CD8-positive, alpha-beta T cell (primary cell): ENCODE measurements at regions of chr11 and their contacts with region 1.

Region 1: GRCh38 chr11:18012863-18013781 is at the start of gene SERGEF:
- DNase-seq: peak; percentile 80 to 97 (median 93)
- ATAC-seq: peak; percentile 82
- H3K4me3 ChIP-seq: peak within 1 kb of the TSS; percentile 94 to 99
- H3K4me3 Mint-ChIP-seq: peak within 1 kb of the TSS; percentile 99
- H3K27ac ChIP-seq: peak within 1 kb of the TSS; percentile 90
- H3K27ac Mint-ChIP-seq: peak within 1 kb of the TSS; percentile 97
- H3K4me1 ChIP-seq: peaks cover 16% of the 10 kb centered on the region
- H3K4me1 Mint-ChIP-seq: peaks cover 32% of the 10 kb centered on the region
- H3K27me3 ChIP-seq: no peaks in the 10 kb centered on the region
- H3K27me3 Mint-ChIP-seq: no peaks in the 10 kb centered on the region
- CTCF ChIP-seq: peak; percentile 8
- total RNA-seq, gene SERGEF: 36.6 to 44.7 TPM

Region 2: DNA sequence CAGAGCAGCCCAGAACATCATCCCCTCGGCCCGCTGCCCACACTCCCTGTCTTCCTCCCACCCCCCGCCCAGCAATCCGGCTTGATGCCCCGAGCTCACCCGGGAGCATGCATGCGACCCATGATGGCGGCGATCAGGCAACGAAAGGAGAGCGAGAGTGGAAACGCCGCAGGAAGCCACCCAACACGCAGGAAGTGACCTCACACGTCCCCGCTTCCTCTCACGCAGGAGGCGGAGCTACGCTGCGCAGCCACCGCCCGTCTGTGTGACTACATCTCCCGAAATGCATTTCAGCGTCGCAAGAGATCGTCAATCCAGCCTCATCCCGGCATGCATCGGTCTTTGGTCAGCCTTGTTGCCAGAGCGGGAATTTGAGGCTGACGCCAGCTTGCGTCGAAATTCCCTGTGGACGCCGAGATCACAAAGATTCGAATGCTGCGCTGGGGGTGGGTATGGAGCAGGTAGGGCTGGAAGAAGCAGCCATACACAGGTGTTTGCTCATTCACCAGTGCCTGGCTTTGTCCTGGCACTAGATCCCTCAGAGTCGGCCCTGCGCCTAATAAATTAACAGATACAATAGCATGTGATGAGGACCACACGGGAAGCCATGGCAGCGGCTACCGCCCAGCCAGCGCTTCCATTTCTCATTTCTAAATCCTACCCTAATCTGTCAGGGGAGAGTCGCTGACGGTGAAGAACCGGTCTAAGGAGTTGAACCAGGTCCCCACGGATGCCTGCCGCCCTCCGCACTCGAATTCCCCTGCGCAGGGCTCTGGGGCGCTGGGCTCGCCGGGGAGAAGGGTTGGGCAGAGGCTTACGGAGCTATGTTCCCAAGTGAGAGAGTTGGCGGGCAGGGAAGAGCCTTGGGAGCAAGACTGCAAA is 935.4 kb before region 1 on chr11 and contains the start of gene RPS13:
- CTCF ChIA-PET with region 1: no interaction called
- POLR2A ChIA-PET with region 1: interaction called, 5 read pairs
- intact Hi-C with region 1: loop called in 1 of 2 experiments (anchors 5 kb)
- DNase-seq: peak; percentile 88 to 99 (median 95)
- ATAC-seq: peak; percentile 94
- H3K4me3 ChIP-seq: peak within 1 kb of the TSS; percentile 86 to 95
- H3K4me3 Mint-ChIP-seq: peak within 1 kb of the TSS; percentile 99
- H3K27ac ChIP-seq: peak within 1 kb of the TSS; percentile 92 to 96
- H3K27ac Mint-ChIP-seq: peak within 1 kb of the TSS; percentile 99
- H3K4me1 ChIP-seq: peaks cover 25% of the 10 kb centered on the region
- H3K4me1 Mint-ChIP-seq: peaks cover 48% of the 10 kb centered on the region
- H3K27me3 ChIP-seq: no peaks in the 10 kb centered on the region
- H3K27me3 Mint-ChIP-seq: no peaks in the 10 kb centered on the region
- CTCF ChIP-seq: no peak
- total RNA-seq, gene RPS13: 2,112 to 2,169 TPM

Region 3: GRCh38 chr11:17991783-17992433 is 21.2 kb before region 1 on chr11:
- CTCF ChIA-PET with region 1: interaction called, 3 read pairs
- POLR2A ChIA-PET with region 1: no interaction called
- intact Hi-C with region 1: loop called in 1 of 2 experiments (anchors 1 kb)
- DNase-seq: peak in 8 of 9 experiments; percentile 20 to 67 (median 44)
- ATAC-seq: peak; percentile 81
- H3K4me3 ChIP-seq: no peak overlapping the region
- H3K4me3 Mint-ChIP-seq: no peak overlapping the region
- H3K27ac ChIP-seq: no peak overlapping the region
- H3K27ac Mint-ChIP-seq: no peak overlapping the region
- H3K4me1 ChIP-seq: no peaks in the 10 kb centered on the region
- H3K4me1 Mint-ChIP-seq: no peaks in the 10 kb centered on the region
- H3K27me3 ChIP-seq: no peaks in the 10 kb centered on the region
- H3K27me3 Mint-ChIP-seq: no peaks in the 10 kb centered on the region
- CTCF ChIP-seq: peak; percentile 96

Region 4: DNA sequence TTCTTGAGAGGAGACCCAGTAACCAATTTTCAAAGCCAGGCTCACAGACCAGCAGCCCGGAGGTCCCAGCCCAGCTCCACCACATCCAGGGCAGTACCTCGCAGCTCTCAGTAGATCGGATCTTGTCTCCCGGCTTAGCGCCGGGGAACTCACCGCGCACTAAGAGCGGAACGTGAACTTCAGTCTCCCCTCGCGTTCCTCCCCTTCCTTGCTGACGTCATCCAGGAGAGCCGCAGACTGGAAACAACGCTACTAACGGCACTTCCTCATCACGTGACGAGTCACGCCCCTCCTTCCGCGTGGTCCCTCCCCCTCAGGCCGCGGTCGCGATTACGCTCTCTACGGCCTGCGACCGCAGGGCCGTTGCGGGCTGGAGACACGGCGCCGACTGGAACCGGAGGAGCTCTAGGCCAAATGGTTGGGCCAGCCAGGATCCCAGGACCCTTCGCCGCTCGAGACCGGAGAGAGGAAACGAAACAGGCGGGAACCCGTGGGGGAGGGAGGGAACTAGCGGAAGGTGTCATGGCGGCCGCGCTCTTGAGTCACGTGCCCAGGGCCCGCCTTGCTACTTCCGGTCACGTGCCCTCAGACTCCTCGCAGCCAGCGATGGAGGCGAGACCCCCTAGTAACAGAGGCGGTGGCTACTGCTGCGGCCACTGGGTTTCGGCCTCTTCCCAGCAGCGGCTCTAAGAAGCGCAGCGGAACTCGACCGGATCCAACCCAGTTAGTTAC is 309.0 kb after region 1 on chr11 and contains the starts of genes GTF2H1 and HPS5:
- CTCF ChIA-PET with region 1: no interaction called
- POLR2A ChIA-PET with region 1: interaction called, 3 read pairs
- intact Hi-C with region 1: loop called (anchors 1 to 5 kb)
- DNase-seq: peak; percentile 91 to 100 (median 96)
- ATAC-seq: peak; percentile 87
- H3K4me3 ChIP-seq: peak within 1 kb of the TSS; percentile 89 to 94
- H3K4me3 Mint-ChIP-seq: peak within 1 kb of the TSS; percentile 100
- H3K27ac ChIP-seq: peak within 1 kb of the TSS; percentile 92 to 99
- H3K27ac Mint-ChIP-seq: peak within 1 kb of the TSS; percentile 100
- H3K4me1 ChIP-seq: peaks cover 51% of the 10 kb centered on the region
- H3K4me1 Mint-ChIP-seq: peaks cover 81% of the 10 kb centered on the region
- H3K27me3 ChIP-seq: no peaks in the 10 kb centered on the region
- H3K27me3 Mint-ChIP-seq: no peaks in the 10 kb centered on the region
- CTCF ChIP-seq: no peak
- total RNA-seq, gene GTF2H1: 11.3 to 14.3 TPM
- total RNA-seq, gene HPS5: 9.9 to 12.6 TPM

Region 5: GRCh38 chr11:18540207-18541009 is 527.3 kb after region 1 on chr11:
- CTCF ChIA-PET with region 1: no interaction called
- POLR2A ChIA-PET with region 1: no interaction called
- intact Hi-C with region 1: loop called in 1 of 2 experiments (anchors 10 kb)
- DNase-seq: peak in 2 of 9 experiments; percentile 52 to 64
- ATAC-seq: peak; percentile 63
- H3K4me3 ChIP-seq: no peak overlapping the region
- H3K4me3 Mint-ChIP-seq: no peak overlapping the region
- H3K27ac ChIP-seq: no peak overlapping the region
- H3K27ac Mint-ChIP-seq: no peak overlapping the region
- H3K4me1 ChIP-seq: no peaks in the 10 kb centered on the region
- H3K4me1 Mint-ChIP-seq: no peaks in the 10 kb centered on the region
- H3K27me3 ChIP-seq: no peaks in the 10 kb centered on the region
- H3K27me3 Mint-ChIP-seq: no peaks in the 10 kb centered on the region
- CTCF ChIP-seq: peak; percentile 59

Region 6: DNA sequence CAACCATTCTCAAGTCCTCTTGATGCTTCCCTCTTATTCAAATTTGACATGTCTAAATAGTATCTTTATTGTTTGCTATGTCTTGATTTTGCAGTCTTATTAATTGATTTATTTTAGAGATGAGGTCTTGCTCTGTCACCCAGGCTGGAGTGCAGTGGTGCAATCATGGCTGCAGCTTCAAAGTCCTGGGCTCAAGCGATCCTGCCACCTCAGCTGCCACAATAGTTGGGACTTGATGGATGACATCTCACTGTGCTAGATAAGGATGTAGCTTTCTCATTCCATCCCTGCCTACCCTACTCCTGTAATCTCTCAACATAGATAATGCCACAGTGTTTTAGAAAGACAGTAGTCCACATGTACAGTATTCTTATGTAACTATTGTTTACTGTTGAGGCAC is 628.6 kb after region 1 on chr11:
- CTCF ChIA-PET with region 1: no interaction called
- POLR2A ChIA-PET with region 1: no interaction called
- intact Hi-C with region 1: no loop called
- DNase-seq: no peak
- ATAC-seq: no peak
- H3K4me3 ChIP-seq: no peak overlapping the region
- H3K4me3 Mint-ChIP-seq: no peak overlapping the region
- H3K27ac ChIP-seq: no peak overlapping the region
- H3K27ac Mint-ChIP-seq: no peak overlapping the region
- H3K4me1 ChIP-seq: no peaks in the 10 kb centered on the region
- H3K4me1 Mint-ChIP-seq: no peaks in the 10 kb centered on the region
- H3K27me3 ChIP-seq: no peaks in the 10 kb centered on the region
- H3K27me3 Mint-ChIP-seq: no peaks in the 10 kb centered on the region
- CTCF ChIP-seq: no peak

Region 7: GRCh38 chr11:18713646-18714442 is 700.7 kb after region 1 on chr11:
- CTCF ChIA-PET with region 1: no interaction called
- POLR2A ChIA-PET with region 1: no interaction called
- intact Hi-C with region 1: loop called in 1 of 2 experiments (anchors 5 kb)
- DNase-seq: no peak
- ATAC-seq: no peak
- H3K4me3 ChIP-seq: no peak overlapping the region
- H3K4me3 Mint-ChIP-seq: no peak overlapping the region
- H3K27ac ChIP-seq: no peak overlapping the region
- H3K27ac Mint-ChIP-seq: no peak overlapping the region
- H3K4me1 ChIP-seq: no peaks in the 10 kb centered on the region
- H3K4me1 Mint-ChIP-seq: no peaks in the 10 kb centered on the region
- H3K27me3 ChIP-seq: no peaks in the 10 kb centered on the region
- H3K27me3 Mint-ChIP-seq: no peaks in the 10 kb centered on the region
- CTCF ChIP-seq: no peak